Gastrocnemius medialis (tissue), 4 donors: ENCODE measurements at regions of chr20 and their contacts with region 1.

Region 1: GRCh38 chr20:44692932-44693476 is 22.2 kb upstream of the CCN5 start:
- DNase-seq: peak; percentile 72 to 86
- ATAC-seq: peak; percentile 68 to 77
- H3K4me3 ChIP-seq: no peak overlapping the region
- H3K27ac ChIP-seq: peak overlapping the region; percentile 47 to 83 (median 66)
- H3K4me1 ChIP-seq: peaks cover 24 to 40% of the 10 kb centered on the region in 2 donors
- H3K27me3 ChIP-seq: no peaks in the 10 kb centered on the region
- CTCF ChIP-seq: no peak
- POLR2A ChIP-seq: peak in 1 of 2 donors; percentile 18

Region 2: GRCh38 chr20:44714696-44715482 is 21.9 kb after region 1 on chr20 and contains the start of gene CCN5:
- in situ Hi-C with region 1: no loop called
- intact Hi-C with region 1: loop called (anchors 1 kb)
- DNase-seq: peak; percentile 73 to 88
- ATAC-seq: peak; percentile 87 to 88
- H3K4me3 ChIP-seq: peak within 1 kb of the TSS; percentile 0 to 31 (median 24)
- H3K27ac ChIP-seq: peak within 1 kb of the TSS; percentile 83 to 94 (median 88)
- H3K4me1 ChIP-seq: peaks cover 20 to 29% of the 10 kb centered on the region in 2 donors
- H3K27me3 ChIP-seq: no peaks in the 10 kb centered on the region
- CTCF ChIP-seq: no peak
- POLR2A ChIP-seq: no peak
- total RNA-seq, gene CCN5: 16.4 to 65.3 (median 45.7) TPM

Region 3: GRCh38 chr20:44785769-44786168 is 92.8 kb after region 1 on chr20:
- in situ Hi-C with region 1: no loop called
- intact Hi-C with region 1: no loop called
- DNase-seq: no peak
- ATAC-seq: no peak
- H3K4me3 ChIP-seq: no peak overlapping the region
- H3K27ac ChIP-seq: no peak overlapping the region
- H3K4me1 ChIP-seq: peaks cover 0 to 6% of the 10 kb centered on the region in 2 donors
- H3K27me3 ChIP-seq: no peaks in the 10 kb centered on the region
- CTCF ChIP-seq: no peak
- POLR2A ChIP-seq: no peak